MCF 10A (cell line): ENCODE measurements at regions of chr7 and their contacts with region 1.

Region 1: DNA sequence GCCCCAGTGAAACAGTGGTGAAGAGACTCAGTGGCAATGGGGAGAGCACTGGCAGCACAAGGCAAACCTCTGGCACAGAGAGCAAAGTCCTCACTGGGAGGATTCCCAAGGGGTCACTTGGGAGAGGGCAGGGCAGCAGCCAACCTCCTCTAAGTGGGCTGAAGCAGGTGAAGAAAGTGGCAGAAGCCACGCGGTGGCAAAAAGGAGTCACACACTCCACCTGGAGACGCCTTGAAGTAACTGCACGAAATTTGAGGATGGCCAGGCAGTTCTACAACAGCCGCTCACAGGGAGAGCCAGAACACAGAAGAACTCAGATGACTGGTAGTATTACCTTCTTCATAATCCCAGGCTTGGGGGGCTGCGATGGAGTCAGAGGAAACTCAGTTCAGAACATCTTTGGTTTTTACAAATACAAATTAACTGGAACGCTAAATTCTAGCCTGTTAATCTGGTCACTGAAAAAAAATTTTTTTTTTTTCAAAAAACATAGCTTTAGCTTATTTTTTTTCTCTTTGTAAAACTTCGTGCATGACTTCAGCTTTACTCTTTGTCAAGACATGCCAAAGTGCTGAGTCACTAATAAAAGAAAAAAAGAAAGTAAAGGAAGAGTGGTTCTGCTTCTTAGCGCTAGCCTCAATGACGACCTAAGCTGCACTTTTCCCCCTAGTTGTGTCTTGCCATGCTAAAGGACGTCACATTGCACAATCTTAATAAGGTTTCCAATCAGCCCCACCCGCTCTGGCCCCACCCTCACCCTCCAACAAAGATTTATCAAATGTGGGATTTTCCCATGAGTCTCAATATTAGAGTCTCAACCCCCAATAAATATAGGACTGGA is 435 bp upstream of the IL6 start:
- DNase-seq: peak; percentile 86
- H3K4me3 Mint-ChIP-seq: peak overlapping the region; percentile 72
- H3K27ac Mint-ChIP-seq: peak overlapping the region; percentile 71
- H3K4me1 Mint-ChIP-seq: peaks cover 45% of the 10 kb centered on the region
- H3K27me3 Mint-ChIP-seq: no peaks in the 10 kb centered on the region
- CTCF ChIP-seq: peak; percentile 63

Region 2: DNA sequence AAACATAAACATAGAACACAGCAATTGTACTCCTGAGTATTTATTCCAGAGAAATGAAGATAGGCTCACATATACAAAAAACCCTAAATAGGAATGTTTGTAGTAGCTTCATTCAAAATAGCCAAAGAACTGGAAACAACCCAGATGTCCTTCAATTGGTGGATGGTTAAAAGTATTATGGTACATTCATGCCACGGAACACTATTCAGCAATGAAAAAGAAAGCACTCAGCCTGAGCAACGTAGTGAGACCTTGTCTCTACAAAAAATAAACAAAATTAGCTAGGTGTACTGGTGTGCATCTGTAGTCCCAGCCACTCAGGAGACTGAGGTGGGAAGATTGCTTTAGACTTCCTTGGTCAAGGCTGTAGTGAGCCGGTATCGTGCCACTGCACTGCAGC is 464.0 kb before region 1 on chr7:
- CTCF ChIA-PET with region 1: no interaction called
- POLR2A ChIA-PET with region 1: no interaction called
- intact Hi-C with region 1: no loop called
- DNase-seq: no peak
- H3K4me3 Mint-ChIP-seq: no peak overlapping the region
- H3K27ac Mint-ChIP-seq: no peak overlapping the region
- H3K4me1 Mint-ChIP-seq: no peaks in the 10 kb centered on the region
- H3K27me3 Mint-ChIP-seq: no peaks in the 10 kb centered on the region
- CTCF ChIP-seq: no peak

Region 3: DNA sequence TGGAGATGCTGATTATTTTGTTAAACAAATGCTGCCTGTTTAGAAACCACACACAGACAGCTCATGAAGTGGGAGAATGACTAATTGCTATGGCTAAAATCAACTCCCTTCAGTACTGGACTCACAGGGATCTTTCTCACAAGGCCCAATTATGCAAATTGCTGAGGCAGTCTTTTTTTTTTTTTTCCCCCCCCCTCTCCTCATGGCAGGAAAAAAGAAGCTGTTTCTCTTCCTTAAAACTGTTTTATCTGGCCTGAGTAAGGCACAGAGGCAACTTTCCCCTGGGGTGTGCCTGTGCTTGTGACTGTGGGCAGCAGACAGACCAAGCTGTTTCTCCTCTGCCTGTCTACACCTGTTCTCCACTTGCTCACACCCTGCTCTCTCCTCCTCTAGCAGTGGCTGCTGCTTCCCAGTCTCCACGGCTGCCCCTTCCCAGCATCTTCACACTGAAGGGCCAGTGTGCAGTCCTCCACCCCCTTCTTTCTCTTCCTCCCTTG is 161.2 kb before region 1 on chr7:
- CTCF ChIA-PET with region 1: interaction called, 544 read pairs
- POLR2A ChIA-PET with region 1: interaction called, 52 read pairs
- intact Hi-C with region 1: loop called (anchors 1 kb)
- DNase-seq: peak; percentile 70
- H3K4me3 Mint-ChIP-seq: no peak overlapping the region
- H3K27ac Mint-ChIP-seq: peak overlapping the region; percentile 40
- H3K4me1 Mint-ChIP-seq: peaks cover 40% of the 10 kb centered on the region
- H3K27me3 Mint-ChIP-seq: no peaks in the 10 kb centered on the region
- CTCF ChIP-seq: no peak

Region 4: DNA sequence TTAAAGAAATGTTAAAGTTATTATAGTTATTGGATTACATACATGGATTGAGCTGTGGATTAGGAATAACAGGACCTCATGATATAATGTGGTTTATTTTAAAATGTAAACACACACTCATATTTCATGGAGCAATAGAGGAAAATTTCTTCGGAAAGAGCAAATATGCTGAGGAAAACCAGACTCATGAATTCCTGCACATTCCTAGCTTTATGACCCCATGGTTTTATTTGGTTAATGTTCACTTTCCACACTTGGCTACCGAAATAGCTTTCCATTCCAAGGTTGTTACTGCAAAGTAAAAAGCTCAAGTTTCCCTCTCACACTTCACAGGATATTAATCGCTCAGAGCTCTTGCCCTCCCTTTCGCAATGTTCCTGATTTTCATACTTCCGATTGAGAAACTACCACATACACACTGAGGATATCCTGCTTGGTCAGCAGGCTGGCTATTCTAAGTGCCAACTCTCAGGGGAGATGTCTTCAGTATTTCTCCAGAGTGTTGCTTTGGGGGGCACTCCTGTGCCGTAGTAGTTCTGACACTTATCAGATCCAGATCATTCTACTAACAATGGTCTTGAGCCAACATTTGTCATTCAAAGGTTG is 149.1 kb before region 1 on chr7:
- CTCF ChIA-PET with region 1: interaction called, 15 read pairs
- POLR2A ChIA-PET with region 1: interaction called, 8 read pairs
- intact Hi-C with region 1: loop called (anchors 1 kb)
- DNase-seq: peak; percentile 95
- H3K4me3 Mint-ChIP-seq: no peak overlapping the region
- H3K27ac Mint-ChIP-seq: peak overlapping the region; percentile 85
- H3K4me1 Mint-ChIP-seq: peaks cover 42% of the 10 kb centered on the region
- H3K27me3 Mint-ChIP-seq: no peaks in the 10 kb centered on the region
- CTCF ChIP-seq: no peak

Region 5: GRCh38 chr7:22582860-22583640 is 143.5 kb before region 1 on chr7:
- CTCF ChIA-PET with region 1: interaction called, 15 read pairs
- POLR2A ChIA-PET with region 1: interaction called, 8 read pairs
- intact Hi-C with region 1: no loop called
- DNase-seq: peak; percentile 95
- H3K4me3 Mint-ChIP-seq: no peak overlapping the region
- H3K27ac Mint-ChIP-seq: peak overlapping the region; percentile 92
- H3K4me1 Mint-ChIP-seq: peaks cover 52% of the 10 kb centered on the region
- H3K27me3 Mint-ChIP-seq: no peaks in the 10 kb centered on the region
- CTCF ChIP-seq: no peak

Region 6: GRCh38 chr7:22657479-22657878 is 69.1 kb before region 1 on chr7:
- CTCF ChIA-PET with region 1: interaction called, 5 read pairs
- POLR2A ChIA-PET with region 1: no interaction called
- intact Hi-C with region 1: loop called (anchors 1 kb)
- DNase-seq: no peak
- H3K4me3 Mint-ChIP-seq: no peak overlapping the region
- H3K27ac Mint-ChIP-seq: no peak overlapping the region
- H3K4me1 Mint-ChIP-seq: peaks cover 4% of the 10 kb centered on the region
- H3K27me3 Mint-ChIP-seq: no peaks in the 10 kb centered on the region
- CTCF ChIP-seq: no peak

Region 7: GRCh38 chr7:22667562-22668239 is 58.9 kb before region 1 on chr7:
- CTCF ChIA-PET with region 1: interaction called, 4 read pairs
- POLR2A ChIA-PET with region 1: interaction called, 4 read pairs
- intact Hi-C with region 1: loop called (anchors 2 kb)
- DNase-seq: peak; percentile 60
- H3K4me3 Mint-ChIP-seq: no peak overlapping the region
- H3K27ac Mint-ChIP-seq: peak overlapping the region; percentile 66
- H3K4me1 Mint-ChIP-seq: peaks cover 41% of the 10 kb centered on the region
- H3K27me3 Mint-ChIP-seq: no peaks in the 10 kb centered on the region
- CTCF ChIP-seq: no peak

Region 8: DNA sequence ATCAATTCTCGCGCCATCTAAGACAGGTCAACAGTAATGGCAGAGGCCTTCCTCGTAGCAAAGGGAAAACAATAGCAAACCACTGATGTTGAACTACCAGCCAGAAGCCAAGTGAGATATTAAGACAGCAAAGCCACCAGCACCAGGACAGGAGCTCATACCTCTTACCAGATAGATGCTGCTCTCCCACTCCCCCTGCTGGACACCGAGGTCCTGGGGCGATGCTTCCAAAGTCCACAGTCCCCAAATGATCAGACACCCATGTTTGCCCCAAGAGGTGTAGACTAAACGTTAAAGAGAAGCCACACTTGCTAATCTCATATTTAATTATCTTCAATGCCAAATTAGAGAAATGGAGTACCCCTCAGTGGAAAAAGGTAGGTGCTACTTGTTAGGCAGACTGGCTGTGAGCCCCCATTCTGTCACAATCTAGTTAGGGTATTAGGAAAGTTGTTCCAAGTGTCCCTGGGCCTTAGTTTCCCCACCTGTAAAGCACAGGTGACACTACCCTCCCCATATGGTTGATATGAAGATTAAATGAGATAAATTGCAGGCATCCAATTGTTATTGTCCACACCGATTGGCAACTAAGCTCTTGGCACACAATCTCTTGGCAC is 56.2 kb after region 1 on chr7:
- CTCF ChIA-PET with region 1: interaction called, 5 read pairs
- POLR2A ChIA-PET with region 1: no interaction called
- intact Hi-C with region 1: loop called (anchors 5 kb)
- DNase-seq: peak; percentile 71
- H3K4me3 Mint-ChIP-seq: no peak overlapping the region
- H3K27ac Mint-ChIP-seq: no peak overlapping the region
- H3K4me1 Mint-ChIP-seq: peaks cover 9% of the 10 kb centered on the region
- H3K27me3 Mint-ChIP-seq: no peaks in the 10 kb centered on the region
- CTCF ChIP-seq: peak; percentile 85